ENCODE measurements at regions of chr18 and their contacts with region 1.

Region 1: DNA sequence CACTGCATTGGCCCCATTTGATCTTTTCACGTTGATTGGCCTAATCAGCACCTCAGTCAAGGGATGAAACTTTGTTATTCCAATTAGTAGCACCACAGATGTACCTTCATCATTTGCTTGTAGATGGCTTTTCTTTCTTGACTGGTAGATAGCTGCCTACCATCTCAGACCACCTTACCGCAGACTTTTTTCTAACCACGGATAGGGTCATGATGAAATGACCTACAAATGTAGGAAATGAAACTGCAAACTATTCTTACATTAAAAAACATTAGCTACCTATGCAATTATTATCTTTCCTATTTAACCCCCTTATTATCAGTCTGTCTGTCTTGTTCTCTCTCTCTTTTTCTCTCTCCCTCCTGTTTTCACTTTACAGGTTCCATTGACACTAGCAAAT is 22.4 kb upstream of the SLC25A52 start:
- DNase-seq: no peak
- ATAC-seq: no peak
- H3K4me3 ChIP-seq: no peak overlapping the region
- H3K27ac ChIP-seq: no peak overlapping the region
- H3K4me1 ChIP-seq: no peaks in the 10 kb centered on the region
- H3K27me3 ChIP-seq: no peaks in the 10 kb centered on the region
- CTCF ChIP-seq: no peak

Region 2: GRCh38 chr18:31801078-31801477 is 18.0 kb after region 1 on chr18:
- intact Hi-C with region 1: loop called in 1 of 10 experiments (anchors 1 kb)
- DNase-seq: no peak
- ATAC-seq: no peak
- H3K4me3 ChIP-seq: no peak overlapping the region
- H3K27ac ChIP-seq: no peak overlapping the region
- H3K4me1 ChIP-seq: no peaks in the 10 kb centered on the region
- H3K27me3 ChIP-seq: peaks cover 0 to 4% (median 0%) of the 10 kb centered on the region in 7 donors
- CTCF ChIP-seq: no peak

Region 3: GRCh38 chr18:31835528-31836133 is 52.6 kb after region 1 on chr18:
- intact Hi-C with region 1: no loop called
- DNase-seq: no peak
- ATAC-seq: no peak
- H3K4me3 ChIP-seq: no peak overlapping the region
- H3K27ac ChIP-seq: no peak overlapping the region
- H3K4me1 ChIP-seq: no peaks in the 10 kb centered on the region
- H3K27me3 ChIP-seq: no peaks in the 10 kb centered on the region
- CTCF ChIP-seq: no peak

Region 4: DNA sequence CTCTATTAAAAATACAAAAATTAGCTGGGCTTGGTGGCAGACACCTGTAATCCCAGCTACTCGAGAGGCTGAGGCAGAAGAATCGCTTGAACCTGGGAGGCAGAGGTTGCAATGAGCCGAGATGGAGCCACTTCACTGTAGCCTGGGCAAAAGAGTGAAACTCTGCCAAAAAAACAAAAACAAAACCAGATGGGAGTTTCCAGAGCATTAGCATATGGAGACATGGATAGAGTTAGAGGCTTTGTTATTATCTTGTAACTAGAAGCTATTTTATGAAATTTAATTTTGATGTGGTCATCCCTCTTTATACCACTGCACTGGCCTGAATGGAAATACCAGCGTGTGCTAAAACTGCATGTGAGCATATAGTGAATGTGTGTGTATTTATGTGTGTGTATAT is 101.0 kb after region 1 on chr18:
- intact Hi-C with region 1: no loop called
- DNase-seq: no peak
- ATAC-seq: no peak
- H3K4me3 ChIP-seq: no peak overlapping the region
- H3K27ac ChIP-seq: no peak overlapping the region
- H3K4me1 ChIP-seq: no peaks in the 10 kb centered on the region
- H3K27me3 ChIP-seq: no peaks in the 10 kb centered on the region
- CTCF ChIP-seq: no peak